WTC11 (cell line): ENCODE measurements at regions of chr4 and their contacts with region 1.

Region 1: GRCh38 chr4:43132010-43132582 is 239.6 kb downstream of the GRXCR1 start:
- DNase-seq: peak; percentile 75
- ATAC-seq: peak; percentile 44; the same call in 1 of the 2 replicates
- H3K4me3 Mint-ChIP-seq: no peak overlapping the region
- H3K27ac Mint-ChIP-seq: no peak overlapping the region
- H3K4me1 Mint-ChIP-seq: peaks cover 28% of the 10 kb centered on the region
- H3K27me3 Mint-ChIP-seq: peaks cover 13% of the 10 kb centered on the region
- CTCF ChIP-seq: peak; percentile 69

Region 2: GRCh38 chr4:43103048-43103447 is 29.0 kb before region 1 on chr4:
- CTCF ChIA-PET with region 1: no interaction called
- POLR2A ChIA-PET with region 1: no interaction called
- DNase-seq: no peak
- ATAC-seq: no peak
- H3K4me3 Mint-ChIP-seq: no peak overlapping the region
- H3K27ac Mint-ChIP-seq: no peak overlapping the region
- H3K4me1 Mint-ChIP-seq: peaks cover 7% of the 10 kb centered on the region
- H3K27me3 Mint-ChIP-seq: no peaks in the 10 kb centered on the region
- CTCF ChIP-seq: no peak

Region 3: GRCh38 chr4:44425614-44426208 is 1293.6 kb after region 1 on chr4:
- CTCF ChIA-PET with region 1: interaction called, 11 read pairs
- POLR2A ChIA-PET with region 1: no interaction called
- DNase-seq: peak; percentile 49
- ATAC-seq: peak; percentile 97
- H3K4me3 Mint-ChIP-seq: no peak overlapping the region
- H3K27ac Mint-ChIP-seq: no peak overlapping the region
- H3K4me1 Mint-ChIP-seq: peaks cover 23% of the 10 kb centered on the region
- H3K27me3 Mint-ChIP-seq: no peaks in the 10 kb centered on the region
- CTCF ChIP-seq: no peak; the same call in 1 of the 2 replicates